ENCODE measurements at regions of chr1 and their contacts with region 1.

Region 1: DNA sequence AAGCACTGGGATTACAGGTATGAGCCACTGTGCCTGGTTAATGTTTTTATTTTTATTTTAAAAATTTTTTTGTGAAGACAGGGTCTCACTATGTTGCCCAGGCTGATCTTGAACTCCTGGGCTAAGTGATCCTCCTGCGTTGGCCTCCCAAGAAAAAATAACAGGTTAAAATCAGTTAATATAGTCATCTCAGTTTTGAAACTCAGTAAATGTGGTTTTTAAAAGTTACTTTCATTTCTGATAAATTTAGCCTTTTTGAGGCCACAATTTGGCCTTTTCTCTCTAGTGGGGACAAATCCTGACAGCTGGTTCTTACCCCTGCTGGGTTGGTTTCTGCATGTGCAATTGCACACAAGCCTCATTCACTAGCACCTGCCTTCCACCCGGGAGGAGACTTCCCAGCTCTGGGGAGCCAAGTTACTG is 13.3 kb downstream of the PMF1 start:
- DNase-seq: no peak
- ATAC-seq: no peak
- H3K4me3 ChIP-seq: no peak overlapping the region
- H3K27ac ChIP-seq: peak overlapping the region in 1 of 3 donors; percentile 28
- H3K4me1 ChIP-seq: peaks cover 0 to 7% (median 3%) of the 10 kb centered on the region in 4 donors
- H3K27me3 ChIP-seq: no peaks in the 10 kb centered on the region
- CTCF ChIP-seq: no peak
- POLR2A ChIP-seq: no peak

Region 2: GRCh38 chr1:155776404-155776803 is 449.7 kb before region 1 on chr1:
- intact Hi-C with region 1: no loop called
- DNase-seq: no peak
- ATAC-seq: no peak
- H3K4me3 ChIP-seq: no peak overlapping the region
- H3K27ac ChIP-seq: no peak overlapping the region
- H3K4me1 ChIP-seq: no peaks in the 10 kb centered on the region
- H3K27me3 ChIP-seq: no peaks in the 10 kb centered on the region
- CTCF ChIP-seq: no peak
- POLR2A ChIP-seq: no peak

Region 3: GRCh38 chr1:156146020-156146768 is 79.9 kb before region 1 on chr1:
- intact Hi-C with region 1: loop called (anchors 5 kb)
- DNase-seq: peak in 2 of 3 donors; percentile 77 to 80
- ATAC-seq: peak; percentile 83 to 88 (median 86)
- H3K4me3 ChIP-seq: no peak overlapping the region
- H3K27ac ChIP-seq: peak overlapping the region in 1 of 3 donors; percentile 27
- H3K4me1 ChIP-seq: peaks cover 0 to 15% (median 10%) of the 10 kb centered on the region in 4 donors
- H3K27me3 ChIP-seq: no peaks in the 10 kb centered on the region
- CTCF ChIP-seq: peak; percentile 62 to 85 (median 72)
- POLR2A ChIP-seq: no peak